ENCODE measurements at regions of chr5 and their contacts with region 1.

Region 1: GRCh38 chr5:54062958-54063357 is 247.4 kb downstream of the ARL15 start:
- DNase-seq: peak; percentile 78
- ATAC-seq: peak; percentile 54
- H3K4me3 ChIP-seq: no peak overlapping the region
- H3K27ac ChIP-seq: peak overlapping the region; percentile 78
- H3K4me1 ChIP-seq: peaks cover 9% of the 10 kb centered on the region
- H3K27me3 ChIP-seq: no peaks in the 10 kb centered on the region
- CTCF ChIP-seq: no peak
- POLR2A ChIP-seq: no peak
- RAD21 ChIP-seq: no peak

Region 2: GRCh38 chr5:54021413-54022164 is 41.4 kb before region 1 on chr5:
- CTCF ChIA-PET with region 1: no interaction called
- POLR2A ChIA-PET with region 1: no interaction called
- dilution Hi-C with region 1: no loop called
- in situ Hi-C with region 1: no loop called
- intact Hi-C with region 1: loop called (anchors 5 kb)
- DNase-seq: peak; percentile 42
- ATAC-seq: no peak
- H3K4me3 ChIP-seq: no peak overlapping the region
- H3K27ac ChIP-seq: no peak overlapping the region
- H3K4me1 ChIP-seq: peaks cover 15% of the 10 kb centered on the region
- H3K27me3 ChIP-seq: no peaks in the 10 kb centered on the region
- CTCF ChIP-seq: no peak
- POLR2A ChIP-seq: no peak
- RAD21 ChIP-seq: no peak

Region 3: GRCh38 chr5:54090495-54091084 is 27.6 kb after region 1 on chr5:
- CTCF ChIA-PET with region 1: no interaction called
- POLR2A ChIA-PET with region 1: no interaction called
- dilution Hi-C with region 1: no loop called
- in situ Hi-C with region 1: no loop called
- intact Hi-C with region 1: loop called (anchors 1 kb)
- DNase-seq: peak; percentile 85
- ATAC-seq: peak; percentile 66
- H3K4me3 ChIP-seq: 0 out of 2 replicates have a peak overlapping the region, but pooled peaks have one; percentile 1
- H3K27ac ChIP-seq: no peak overlapping the region
- H3K4me1 ChIP-seq: peaks cover 14% of the 10 kb centered on the region
- H3K27me3 ChIP-seq: no peaks in the 10 kb centered on the region
- CTCF ChIP-seq: peak; percentile 41
- POLR2A ChIP-seq: no peak
- RAD21 ChIP-seq: peak; percentile 28

Region 4: DNA sequence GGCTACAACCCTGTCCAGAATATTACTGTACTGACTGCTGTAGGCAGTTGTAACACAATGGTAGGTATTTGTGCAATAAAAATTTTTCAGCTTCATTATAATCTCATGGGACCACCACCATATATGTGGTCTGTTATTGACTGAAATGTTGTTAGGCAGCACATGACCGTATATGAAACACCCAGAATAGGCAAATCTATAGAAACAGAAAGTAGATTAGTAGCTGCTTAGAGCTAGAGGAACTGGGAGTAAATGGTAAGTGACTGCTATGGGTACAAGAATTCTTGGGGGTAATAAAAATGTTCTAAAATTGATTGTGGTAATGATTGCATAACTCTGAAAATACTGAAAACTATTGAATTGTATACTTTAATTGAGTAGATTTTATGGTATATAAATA is 736.7 kb after region 1 on chr5:
- CTCF ChIA-PET with region 1: no interaction called
- POLR2A ChIA-PET with region 1: no interaction called
- dilution Hi-C with region 1: no loop called
- in situ Hi-C with region 1: no loop called
- intact Hi-C with region 1: no loop called
- DNase-seq: no peak
- ATAC-seq: no peak
- H3K4me3 ChIP-seq: no peak overlapping the region
- H3K27ac ChIP-seq: no peak overlapping the region
- H3K4me1 ChIP-seq: peaks cover 6% of the 10 kb centered on the region
- H3K27me3 ChIP-seq: no peaks in the 10 kb centered on the region
- CTCF ChIP-seq: no peak
- POLR2A ChIP-seq: no peak
- RAD21 ChIP-seq: no peak